KBM-7 (cell line): ENCODE measurements at regions of chr15 and their contacts with region 1.

Region 1: GRCh38 chr15:88904624-88905327 is 8.4 kb downstream of the MFGE8 start:
- DNase-seq: peak; percentile 95

Region 2: GRCh38 chr15:89003865-89004725 is 99.3 kb after region 1 on chr15:
- in situ Hi-C with region 1: loop called (anchors 10 kb)
- DNase-seq: peak; percentile 71

Region 3: GRCh38 chr15:89052474-89052873 is 147.7 kb after region 1 on chr15:
- in situ Hi-C with region 1: no loop called
- DNase-seq: peak; percentile 93

Region 4: GRCh38 chr15:89167267-89168176 is 262.7 kb after region 1 on chr15:
- in situ Hi-C with region 1: loop called (anchors 10 kb)
- DNase-seq: peak; percentile 54